ENCODE measurements at regions of chr10 and their contacts with region 1.

Region 1: GRCh38 chr10:97334370-97335175 is at the start of gene FRAT2:
- DNase-seq: peak; percentile 91
- H3K4me3 ChIP-seq: peak within 1 kb of the TSS; percentile 39 to 84 (median 80)
- H3K27ac ChIP-seq: peak within 1 kb of the TSS; percentile 100
- H3K4me1 ChIP-seq: peaks cover 11% of the 10 kb centered on the region
- H3K27me3 ChIP-seq: peaks cover 20 to 29% of the 10 kb centered on the region in 2 experiments
- CTCF ChIP-seq: no peak
- POLR2A ChIP-seq: peak; percentile 56
- total RNA-seq, gene FRAT2: 11.3 and 11.5 TPM in 2 replicates

Region 2: GRCh38 chr10:96664563-96664962 is 670.0 kb before region 1 on chr10:
- CTCF ChIA-PET with region 1: no interaction called
- POLR2A ChIA-PET with region 1: no interaction called
- dilution Hi-C with region 1: no loop called
- intact Hi-C with region 1: no loop called
- DNase-seq: no peak
- H3K4me3 ChIP-seq: no peak overlapping the region
- H3K27ac ChIP-seq: no peak overlapping the region
- H3K4me1 ChIP-seq: no peaks in the 10 kb centered on the region
- H3K27me3 ChIP-seq: no peaks in the 10 kb centered on the region
- CTCF ChIP-seq: no peak
- POLR2A ChIP-seq: no peak

Region 3: GRCh38 chr10:96758423-96758822 is 576.1 kb before region 1 on chr10:
- CTCF ChIA-PET with region 1: no interaction called
- POLR2A ChIA-PET with region 1: no interaction called
- dilution Hi-C with region 1: no loop called
- intact Hi-C with region 1: no loop called
- DNase-seq: no peak
- H3K4me3 ChIP-seq: no peak overlapping the region
- H3K27ac ChIP-seq: no peak overlapping the region
- H3K4me1 ChIP-seq: no peaks in the 10 kb centered on the region
- H3K27me3 ChIP-seq: peaks cover 0 to 4% of the 10 kb centered on the region in 2 experiments
- CTCF ChIP-seq: no peak
- POLR2A ChIP-seq: no peak

Region 4: DNA sequence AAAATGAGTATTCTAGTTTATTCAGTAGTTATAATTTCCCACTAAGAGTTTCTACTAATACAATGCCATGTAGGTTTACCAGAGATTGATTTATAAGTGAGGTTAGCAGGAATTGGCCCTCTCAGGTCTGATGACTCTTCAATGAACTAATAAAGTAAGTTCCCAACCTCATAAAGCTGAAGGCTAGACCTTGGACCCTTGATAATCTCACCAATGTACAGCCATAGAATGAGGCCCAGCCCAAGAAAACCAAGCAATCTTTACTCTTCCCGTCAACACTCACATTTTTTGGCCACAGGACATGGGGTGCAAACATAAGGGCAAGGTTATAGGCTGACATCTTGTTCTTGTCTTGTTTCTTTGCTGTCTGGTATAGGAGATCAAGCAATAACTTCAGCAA is 75.5 kb before region 1 on chr10:
- CTCF ChIA-PET with region 1: no interaction called
- POLR2A ChIA-PET with region 1: no interaction called
- dilution Hi-C with region 1: no loop called
- intact Hi-C with region 1: no loop called
- DNase-seq: no peak
- H3K4me3 ChIP-seq: no peak overlapping the region
- H3K27ac ChIP-seq: no peak overlapping the region
- H3K4me1 ChIP-seq: peaks cover 8% of the 10 kb centered on the region
- H3K27me3 ChIP-seq: no peaks in the 10 kb centered on the region
- CTCF ChIP-seq: no peak
- POLR2A ChIP-seq: no peak

Region 5: GRCh38 chr10:97292097-97292862 is 42.3 kb before region 1 on chr10 and contains the start of gene ARHGAP19:
- CTCF ChIA-PET with region 1: interaction called, 15 read pairs
- POLR2A ChIA-PET with region 1: no interaction called
- dilution Hi-C with region 1: no loop called
- intact Hi-C with region 1: loop called (anchors 1 kb)
- DNase-seq: peak; percentile 99
- H3K4me3 ChIP-seq: peak within 1 kb of the TSS; percentile 59 to 88 (median 65)
- H3K27ac ChIP-seq: peak within 1 kb of the TSS; percentile 85
- H3K4me1 ChIP-seq: no peaks in the 10 kb centered on the region
- H3K27me3 ChIP-seq: no peaks in the 10 kb centered on the region
- CTCF ChIP-seq: peak; percentile 17 to 33
- POLR2A ChIP-seq: peak; percentile 85
- total RNA-seq, gene ARHGAP19: 19.1 and 20.0 TPM in 2 replicates

Region 6: DNA sequence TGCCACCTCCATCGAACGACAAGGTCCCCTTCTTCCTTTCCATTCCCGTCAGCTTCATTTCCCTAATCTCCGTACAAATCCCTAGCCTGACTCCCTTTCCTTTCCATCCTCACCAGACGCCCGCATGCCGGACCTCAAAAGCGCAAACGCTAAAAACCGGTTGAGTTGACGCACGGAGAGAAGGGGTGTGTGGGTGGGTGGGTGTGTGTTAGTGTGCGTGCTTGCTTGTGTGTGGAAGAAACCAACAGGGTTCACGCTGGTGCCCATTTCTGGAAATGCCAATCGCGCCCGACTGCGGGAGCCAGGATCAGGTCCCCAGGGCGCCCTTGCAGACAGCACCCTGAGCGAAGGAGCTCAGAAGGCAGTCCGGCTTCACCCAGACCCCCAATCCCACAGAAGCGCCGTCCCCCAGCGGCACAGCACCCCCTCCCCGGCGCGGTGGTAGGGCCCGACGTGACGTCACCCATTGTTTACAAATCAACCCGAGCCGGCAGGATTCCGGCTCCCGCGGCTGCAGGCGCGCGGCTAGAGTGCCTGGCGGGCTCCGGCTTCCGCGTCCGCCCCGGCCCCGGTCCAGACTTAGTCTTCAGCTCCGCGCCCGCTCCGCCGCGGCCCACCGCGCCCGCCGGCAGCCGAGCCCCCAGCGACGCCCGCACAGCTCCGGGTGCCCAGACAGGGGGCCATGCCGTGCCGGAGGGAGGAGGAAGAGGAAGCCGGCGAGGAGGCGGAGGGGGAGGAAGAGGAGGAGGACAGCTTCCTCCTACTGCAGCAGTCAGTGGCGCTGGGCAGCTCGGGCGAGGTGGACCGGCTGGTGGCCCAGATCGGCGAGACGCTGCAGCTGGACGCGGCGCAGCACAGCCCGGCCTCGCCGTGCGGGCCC is 15.6 kb before region 1 on chr10 and contains the start of gene FRAT1:
- CTCF ChIA-PET with region 1: interaction called, 37 read pairs
- POLR2A ChIA-PET with region 1: interaction called, 10 read pairs
- dilution Hi-C with region 1: no loop called
- intact Hi-C with region 1: loop called (anchors 1 kb)
- DNase-seq: peak; percentile 93
- H3K4me3 ChIP-seq: peak within 1 kb of the TSS; percentile 39 to 74 (median 58)
- H3K27ac ChIP-seq: peak within 1 kb of the TSS; percentile 95
- H3K4me1 ChIP-seq: peaks cover 15% of the 10 kb centered on the region
- H3K27me3 ChIP-seq: no peaks in the 10 kb centered on the region
- CTCF ChIP-seq: no peak
- POLR2A ChIP-seq: peak; percentile 26
- total RNA-seq, gene FRAT1: 3.2 and 3.5 TPM in 2 replicates

Region 7: DNA sequence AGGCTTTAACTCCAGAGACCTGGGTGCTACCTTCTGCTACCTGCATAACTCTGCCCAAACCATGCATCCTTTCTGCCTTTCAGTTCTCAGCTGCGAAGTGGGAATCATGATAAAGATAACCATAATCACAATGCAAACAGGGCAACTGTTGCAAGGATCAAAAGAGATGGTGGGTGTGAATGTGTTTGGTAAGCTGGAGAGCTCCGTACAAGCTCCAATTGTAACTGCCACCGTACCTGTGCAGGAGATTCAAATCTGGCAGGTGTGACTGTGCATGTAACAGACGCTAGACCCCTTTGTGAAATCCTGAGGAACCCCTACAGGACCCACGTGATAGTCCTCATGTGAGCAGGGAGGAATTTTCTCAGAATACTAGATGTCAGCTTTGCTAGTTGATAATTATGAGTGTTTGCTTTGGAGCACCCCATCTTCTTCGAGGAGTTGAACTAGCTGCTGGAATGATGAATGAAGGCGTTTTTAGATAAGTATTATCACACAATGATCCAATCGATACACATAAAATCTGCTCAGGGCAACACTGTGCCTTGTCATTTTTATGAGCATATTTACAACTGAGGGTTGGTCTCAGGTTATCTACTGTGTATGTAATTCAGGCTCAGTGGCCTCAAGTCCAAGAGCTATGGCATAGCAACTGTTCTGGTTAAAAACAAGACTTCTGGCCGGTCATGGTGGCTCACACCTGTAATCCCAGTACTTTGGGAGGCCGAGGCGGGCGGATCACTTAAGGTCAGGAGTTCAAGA is 15.4 kb after region 1 on chr10:
- CTCF ChIA-PET with region 1: interaction called, 14 read pairs
- POLR2A ChIA-PET with region 1: no interaction called
- dilution Hi-C with region 1: no loop called
- intact Hi-C with region 1: loop called (anchors 1 kb)
- DNase-seq: no peak
- H3K4me3 ChIP-seq: no peak overlapping the region
- H3K27ac ChIP-seq: no peak overlapping the region
- H3K4me1 ChIP-seq: no peaks in the 10 kb centered on the region
- H3K27me3 ChIP-seq: no peaks in the 10 kb centered on the region
- CTCF ChIP-seq: no peak
- POLR2A ChIP-seq: no peak

Region 8: GRCh38 chr10:97355571-97355975 is 21.0 kb after region 1 on chr10:
- CTCF ChIA-PET with region 1: interaction called, 11 read pairs
- POLR2A ChIA-PET with region 1: no interaction called
- dilution Hi-C with region 1: no loop called
- intact Hi-C with region 1: loop called (anchors 1 kb)
- DNase-seq: peak; percentile 80
- H3K4me3 ChIP-seq: no peak overlapping the region
- H3K27ac ChIP-seq: peak overlapping the region; percentile 36
- H3K4me1 ChIP-seq: peaks cover 13% of the 10 kb centered on the region
- H3K27me3 ChIP-seq: no peaks in the 10 kb centered on the region
- CTCF ChIP-seq: peak; percentile 39 to 45
- POLR2A ChIP-seq: no peak

Region 9: GRCh38 chr10:97400665-97401454 is 66.3 kb after region 1 on chr10 and contains the start of gene RRP12:
- CTCF ChIA-PET with region 1: interaction called, 14 read pairs
- POLR2A ChIA-PET with region 1: no interaction called
- dilution Hi-C with region 1: no loop called
- intact Hi-C with region 1: loop called (anchors 1 kb)
- DNase-seq: peak; percentile 97
- H3K4me3 ChIP-seq: peak within 1 kb of the TSS; percentile 54 to 84 (median 58)
- H3K27ac ChIP-seq: peak within 1 kb of the TSS; percentile 75
- H3K4me1 ChIP-seq: peaks cover 10% of the 10 kb centered on the region
- H3K27me3 ChIP-seq: no peaks in the 10 kb centered on the region
- CTCF ChIP-seq: peak in 1 of 2 donors; percentile 5
- POLR2A ChIP-seq: no peak
- total RNA-seq, gene RRP12: 35.8 and 40.9 TPM in 2 replicates

Region 10: DNA sequence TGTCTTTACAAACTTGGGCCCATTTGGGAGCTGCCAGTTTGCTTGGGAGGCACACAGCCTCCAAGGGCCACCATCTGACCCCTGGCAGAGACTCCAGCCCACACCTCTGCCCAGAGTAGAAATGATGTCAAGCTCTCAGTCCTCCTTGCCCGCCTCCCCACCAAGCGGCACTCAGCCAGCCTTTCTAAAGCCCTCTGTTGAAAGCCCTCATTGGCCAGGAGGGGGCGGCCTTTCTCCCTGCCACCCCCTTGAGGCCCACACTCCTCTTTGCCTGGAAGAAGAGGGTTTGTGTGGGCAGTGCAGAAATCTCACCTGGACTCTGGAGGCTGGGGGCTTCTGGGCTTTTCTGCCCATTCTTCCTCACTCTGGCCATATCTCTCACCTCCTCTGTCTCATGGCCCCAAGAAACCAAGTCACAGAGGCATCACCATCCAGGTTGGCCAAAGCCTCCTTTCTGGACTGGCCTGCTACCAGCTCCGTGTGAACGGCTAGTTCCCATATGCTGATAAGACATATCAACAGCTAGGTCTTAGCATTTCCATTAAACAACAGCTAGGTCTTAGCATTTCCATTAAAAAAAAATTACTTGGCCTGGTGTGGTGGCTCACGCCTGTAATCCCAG is 200.3 kb after region 1 on chr10:
- CTCF ChIA-PET with region 1: no interaction called
- POLR2A ChIA-PET with region 1: no interaction called
- dilution Hi-C with region 1: no loop called
- intact Hi-C with region 1: no loop called
- DNase-seq: peak; percentile 55
- H3K4me3 ChIP-seq: no peak overlapping the region
- H3K27ac ChIP-seq: no peak overlapping the region
- H3K4me1 ChIP-seq: peaks cover 9% of the 10 kb centered on the region
- H3K27me3 ChIP-seq: no peaks in the 10 kb centered on the region
- CTCF ChIP-seq: peak; percentile 64 to 82
- POLR2A ChIP-seq: no peak